ENCODE measurements at regions of chr17 and their contacts with region 1.

Region 1: DNA sequence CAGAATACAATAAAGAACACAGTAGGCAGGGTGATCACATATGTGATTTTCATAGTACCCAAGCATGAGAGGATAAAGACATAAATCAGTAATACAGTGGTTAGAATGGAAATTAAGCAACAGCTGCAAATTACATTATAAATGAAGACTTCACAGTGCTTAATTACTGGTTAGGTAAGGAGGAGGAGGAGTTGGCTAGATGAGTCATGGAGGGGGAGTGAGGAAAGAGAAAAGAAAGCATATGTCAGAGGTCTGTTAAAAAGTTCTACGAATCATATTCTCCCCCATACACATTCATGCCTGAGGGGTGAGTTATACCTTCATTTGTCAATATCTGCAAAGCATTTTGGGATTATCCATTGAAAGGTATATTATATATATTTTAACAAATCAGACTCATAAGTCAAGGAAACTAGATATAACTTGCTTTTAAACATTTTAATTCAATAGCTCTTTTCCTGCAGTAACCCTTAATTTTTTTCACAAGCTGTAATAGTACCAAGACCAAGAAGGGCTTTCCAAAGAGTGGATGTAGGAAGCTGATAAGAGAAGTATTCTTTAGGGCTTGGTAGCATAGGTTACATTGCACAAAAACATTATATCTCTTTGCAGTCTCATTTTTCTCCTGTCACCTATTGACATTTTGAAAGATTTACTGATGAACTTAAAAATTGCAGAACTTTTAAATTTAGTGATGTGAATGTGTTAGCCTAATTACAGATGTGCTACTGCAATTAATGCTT is 99.3 kb downstream of the STXBP4 start:
- DNase-seq: peak; percentile 50
- ATAC-seq: no peak
- H3K4me3 ChIP-seq: no peak overlapping the region
- H3K27ac ChIP-seq: no peak overlapping the region
- H3K4me1 ChIP-seq: no peaks in the 10 kb centered on the region
- H3K27me3 ChIP-seq: no peaks in the 10 kb centered on the region
- CTCF ChIP-seq: no peak
- POLR2A ChIP-seq: no peak
- RAD21 ChIP-seq: no peak

Region 2: DNA sequence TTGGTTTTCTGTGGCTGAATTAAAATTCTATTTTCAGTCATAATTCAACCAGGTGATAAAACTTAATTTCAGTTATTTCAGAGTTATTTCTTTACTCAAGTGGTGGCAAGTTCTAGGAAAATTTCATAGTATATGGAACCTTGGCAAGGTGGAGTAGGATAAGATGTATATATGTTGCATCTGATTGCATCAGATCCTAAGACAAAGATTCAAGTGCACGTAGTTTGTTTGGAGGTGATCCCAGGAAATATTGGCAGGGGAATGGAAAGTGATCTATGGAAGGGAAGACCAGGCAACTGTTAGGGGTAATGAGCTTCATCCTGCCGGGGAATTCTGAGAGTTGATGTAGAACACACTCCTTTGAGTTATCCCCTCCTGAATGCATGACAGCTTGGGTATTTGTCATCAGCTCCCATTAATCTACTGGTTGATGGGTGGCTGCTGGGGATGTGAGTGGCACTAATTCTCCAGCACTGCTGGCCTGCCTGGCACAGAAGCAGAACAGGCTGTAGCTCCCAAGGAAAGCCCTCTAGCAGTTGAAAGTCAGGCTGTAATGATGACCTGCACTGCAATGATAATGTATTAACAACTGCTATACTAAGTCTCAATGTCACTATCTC is 219.4 kb before region 1 on chr17:
- CTCF ChIA-PET with region 1: no interaction called
- POLR2A ChIA-PET with region 1: no interaction called
- dilution Hi-C with region 1: no loop called
- in situ Hi-C with region 1: no loop called
- intact Hi-C with region 1: no loop called
- DNase-seq: no peak
- ATAC-seq: no peak
- H3K4me3 ChIP-seq: no peak overlapping the region
- H3K27ac ChIP-seq: no peak overlapping the region
- H3K4me1 ChIP-seq: no peaks in the 10 kb centered on the region
- H3K27me3 ChIP-seq: no peaks in the 10 kb centered on the region
- CTCF ChIP-seq: no peak
- POLR2A ChIP-seq: no peak
- RAD21 ChIP-seq: no peak

Region 3: GRCh38 chr17:55005520-55005919 is 62.3 kb before region 1 on chr17:
- CTCF ChIA-PET with region 1: no interaction called
- POLR2A ChIA-PET with region 1: no interaction called
- dilution Hi-C with region 1: no loop called
- in situ Hi-C with region 1: no loop called
- intact Hi-C with region 1: loop called (anchors 10 kb)
- DNase-seq: peak; percentile 12
- ATAC-seq: 0 out of 2 replicates have a peak, but pooled peaks have one; percentile 29
- H3K4me3 ChIP-seq: no peak overlapping the region
- H3K27ac ChIP-seq: no peak overlapping the region
- H3K4me1 ChIP-seq: no peaks in the 10 kb centered on the region
- H3K27me3 ChIP-seq: no peaks in the 10 kb centered on the region
- CTCF ChIP-seq: 0 out of 2 replicates have a peak, but pooled peaks have one; percentile 16
- POLR2A ChIP-seq: no peak
- RAD21 ChIP-seq: no peak

Region 4: DNA sequence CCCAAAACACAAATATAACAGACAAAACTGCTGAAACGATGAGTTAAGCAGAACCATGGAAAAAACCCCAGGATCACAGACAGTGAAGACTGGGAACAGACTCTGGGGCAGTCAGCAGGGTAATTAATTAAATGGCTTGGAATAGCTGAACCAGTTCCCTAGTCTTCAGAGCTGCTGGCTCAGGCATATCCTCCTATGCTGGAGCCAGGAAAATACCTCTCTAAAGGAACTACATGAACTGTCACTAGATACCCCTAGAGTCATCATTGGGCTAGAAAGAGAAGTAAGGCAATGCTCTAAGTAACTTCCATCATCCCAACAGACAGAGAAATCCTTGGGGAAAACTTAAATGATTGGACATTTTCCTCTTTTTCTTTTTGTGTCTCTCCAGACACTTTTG is 13.7 kb after region 1 on chr17:
- CTCF ChIA-PET with region 1: no interaction called
- POLR2A ChIA-PET with region 1: interaction called, 3 read pairs
- dilution Hi-C with region 1: no loop called
- in situ Hi-C with region 1: no loop called
- intact Hi-C with region 1: loop called (anchors 1 kb)
- DNase-seq: no peak
- ATAC-seq: no peak
- H3K4me3 ChIP-seq: no peak overlapping the region
- H3K27ac ChIP-seq: no peak overlapping the region
- H3K4me1 ChIP-seq: peaks cover 1% of the 10 kb centered on the region; the same call in 1 of the 2 replicates
- H3K27me3 ChIP-seq: no peaks in the 10 kb centered on the region
- CTCF ChIP-seq: no peak
- POLR2A ChIP-seq: no peak
- RAD21 ChIP-seq: no peak

Region 5: DNA sequence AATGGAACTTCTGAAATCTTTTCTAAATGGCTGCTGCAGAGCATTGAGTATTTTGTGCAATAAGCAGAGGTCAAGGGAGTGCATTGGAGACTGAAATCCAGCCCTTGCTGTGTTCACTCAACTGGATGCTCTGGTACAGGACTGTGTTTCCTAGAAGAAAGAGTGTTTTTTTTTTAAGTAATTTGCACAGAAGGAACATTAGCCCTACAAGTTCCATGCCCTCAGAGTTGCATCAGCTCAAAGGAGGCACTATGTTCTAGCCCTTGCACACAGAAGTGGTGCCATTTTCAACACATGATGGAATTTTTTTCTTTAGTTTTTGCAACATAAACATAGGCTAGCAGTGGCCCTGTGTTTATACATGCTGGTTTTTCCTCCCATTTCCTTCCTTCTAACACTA is 52.8 kb after region 1 on chr17:
- CTCF ChIA-PET with region 1: no interaction called
- POLR2A ChIA-PET with region 1: no interaction called
- dilution Hi-C with region 1: no loop called
- in situ Hi-C with region 1: loop called (anchors 10 kb)
- intact Hi-C with region 1: no loop called
- DNase-seq: no peak
- ATAC-seq: no peak
- H3K4me3 ChIP-seq: no peak overlapping the region
- H3K27ac ChIP-seq: no peak overlapping the region
- H3K4me1 ChIP-seq: no peaks in the 10 kb centered on the region
- H3K27me3 ChIP-seq: no peaks in the 10 kb centered on the region
- CTCF ChIP-seq: no peak
- POLR2A ChIP-seq: no peak
- RAD21 ChIP-seq: no peak

Region 6: DNA sequence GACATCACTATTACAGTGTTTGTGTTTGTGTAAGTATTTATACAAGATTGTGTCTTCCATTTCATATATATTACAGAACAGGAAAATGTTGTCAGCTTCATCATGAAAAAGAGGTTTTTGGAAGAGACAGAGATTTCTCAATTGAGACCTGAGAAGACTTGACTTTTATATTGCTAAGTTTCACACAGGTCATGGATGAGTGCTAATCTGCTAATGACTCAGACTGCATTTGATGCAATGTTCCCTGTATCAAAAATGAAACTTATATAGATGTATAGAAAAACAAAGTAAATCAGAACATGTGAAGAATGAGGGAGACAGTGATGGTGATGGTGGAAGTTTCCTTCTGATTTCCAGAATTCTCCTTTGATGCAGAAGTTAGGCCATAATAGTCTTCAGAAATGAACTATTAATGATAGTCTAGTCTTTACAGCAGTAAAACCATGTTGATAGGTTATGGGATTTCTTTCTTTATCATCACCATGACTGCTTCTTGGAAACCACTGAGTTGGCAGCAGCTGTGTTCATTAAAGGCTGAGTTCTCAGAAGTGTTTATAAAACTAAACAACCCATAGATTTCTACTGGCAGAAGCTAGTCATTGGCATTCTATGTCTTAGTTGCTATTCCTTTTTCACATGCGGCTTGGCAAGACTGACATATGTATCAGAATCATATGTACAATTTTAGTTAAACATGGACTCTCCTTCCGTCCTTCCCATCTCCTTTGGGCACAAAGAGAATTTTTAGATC is 739.1 kb after region 1 on chr17:
- CTCF ChIA-PET with region 1: no interaction called
- POLR2A ChIA-PET with region 1: no interaction called
- dilution Hi-C with region 1: no loop called
- in situ Hi-C with region 1: no loop called
- intact Hi-C with region 1: loop called (anchors 5 kb)
- DNase-seq: no peak
- ATAC-seq: no peak
- H3K4me3 ChIP-seq: no peak overlapping the region
- H3K27ac ChIP-seq: no peak overlapping the region
- H3K4me1 ChIP-seq: no peaks in the 10 kb centered on the region
- H3K27me3 ChIP-seq: no peaks in the 10 kb centered on the region
- CTCF ChIP-seq: no peak
- POLR2A ChIP-seq: no peak
- RAD21 ChIP-seq: no peak